ENCODE measurements at regions of chr14 and their contacts with region 1.

Region 1: GRCh38 chr14:77097700-77098528 is at the start of gene CIPC:
- DNase-seq: peak; percentile 96
- H3K4me3 ChIP-seq: peak within 1 kb of the TSS; percentile 99
- H3K27ac ChIP-seq: peak within 1 kb of the TSS; percentile 73
- H3K27me3 ChIP-seq: no peaks in the 10 kb centered on the region
- CTCF ChIP-seq: no peak
- polyA plus RNA-seq, gene CIPC: 8.9 and 9.9 TPM in 2 replicates

Region 2: DNA sequence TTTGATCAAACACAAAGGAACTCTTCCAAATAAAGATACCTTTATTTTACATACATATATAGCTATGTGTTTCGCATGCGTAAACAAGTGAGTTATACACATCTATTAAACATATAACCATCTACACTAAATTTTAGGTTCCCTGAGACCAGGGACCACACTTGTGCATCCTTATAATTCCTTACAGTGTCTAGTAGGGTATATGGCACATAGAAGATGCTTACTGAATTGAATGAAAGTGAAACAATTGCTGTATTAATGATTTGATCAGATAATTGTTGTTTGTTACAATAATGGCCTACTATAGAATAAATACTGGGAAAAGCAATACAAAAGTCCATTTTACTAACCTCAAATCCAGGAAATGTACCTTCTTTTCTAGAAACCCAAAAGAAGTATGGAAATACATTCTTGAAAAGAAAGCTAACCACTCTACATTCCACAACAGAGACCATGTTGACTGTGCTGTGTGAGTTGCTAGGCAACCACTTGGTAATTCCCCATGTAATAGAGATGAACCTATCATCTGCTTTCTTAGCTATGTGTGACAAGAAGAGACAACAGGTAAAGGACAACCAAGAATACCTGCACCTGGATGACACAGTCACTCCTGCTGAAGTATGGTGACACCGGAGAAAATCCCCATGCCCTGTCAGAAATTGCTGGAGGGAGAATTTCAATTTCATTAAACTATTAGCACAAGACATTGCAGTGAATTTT is 11.7 kb before region 1 on chr14:
- CTCF ChIA-PET with region 1: interaction called, 10 read pairs
- POLR2A ChIA-PET with region 1: no interaction called
- DNase-seq: no peak
- H3K4me3 ChIP-seq: no peak overlapping the region
- H3K27ac ChIP-seq: no peak overlapping the region
- H3K27me3 ChIP-seq: peaks cover 17% of the 10 kb centered on the region
- CTCF ChIP-seq: no peak

Region 3: DNA sequence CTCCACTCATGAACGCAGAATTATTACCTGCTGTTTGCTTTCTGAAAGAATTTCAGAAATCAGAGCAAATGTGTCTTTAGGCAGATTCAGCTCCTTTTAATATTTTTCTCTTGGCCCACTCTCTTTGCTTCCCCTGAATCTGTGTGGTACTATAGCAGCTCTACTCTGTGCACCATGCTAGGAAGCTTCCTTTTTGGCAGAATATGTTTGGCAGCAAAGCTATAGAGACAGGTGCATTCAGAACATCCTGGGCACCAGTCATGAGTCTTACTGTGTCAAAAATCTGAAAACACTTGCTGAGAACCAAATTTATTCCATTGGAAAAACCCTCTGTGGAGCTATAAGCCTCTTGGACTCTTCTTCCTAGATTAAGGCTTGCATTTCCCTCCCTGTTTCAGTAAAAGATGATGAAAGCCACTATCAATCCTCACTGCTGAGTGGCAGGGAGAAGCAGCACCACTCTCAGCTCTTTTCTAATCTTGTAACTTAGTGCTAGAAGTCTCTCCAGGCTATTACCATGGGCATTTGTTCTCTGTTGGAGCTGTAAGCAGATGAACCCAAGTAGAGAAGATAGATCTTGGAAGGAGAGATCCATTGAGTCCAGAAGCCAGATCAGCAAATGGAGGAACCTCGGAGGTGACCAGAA is 18.4 kb after region 1 on chr14:
- CTCF ChIA-PET with region 1: no interaction called
- POLR2A ChIA-PET with region 1: no interaction called
- DNase-seq: no peak
- H3K4me3 ChIP-seq: no peak overlapping the region
- H3K27ac ChIP-seq: no peak overlapping the region
- H3K27me3 ChIP-seq: no peaks in the 10 kb centered on the region
- CTCF ChIP-seq: no peak